Activated CD8-positive, alpha-beta memory T cell treated with anti-CD3 and anti-CD28 coated beads, Interleukin-2, amount 10 ng/mL, durations not matched to agents 7 days and 5 days (primary cell): ENCODE measurements at regions of chr7 and their contacts with region 1.

Region 1: GRCh38 chr7:38215735-38216670 is 38.0 kb downstream of the STARD3NL start:
- DNase-seq: peak; percentile 90
- ATAC-seq: peak; percentile 65
- H3K4me3 Mint-ChIP-seq: peak overlapping the region; percentile 34
- H3K27ac Mint-ChIP-seq: peak overlapping the region; percentile 91
- H3K4me1 Mint-ChIP-seq: peaks cover 55% of the 10 kb centered on the region
- H3K27me3 Mint-ChIP-seq: no peaks in the 10 kb centered on the region

Region 2: DNA sequence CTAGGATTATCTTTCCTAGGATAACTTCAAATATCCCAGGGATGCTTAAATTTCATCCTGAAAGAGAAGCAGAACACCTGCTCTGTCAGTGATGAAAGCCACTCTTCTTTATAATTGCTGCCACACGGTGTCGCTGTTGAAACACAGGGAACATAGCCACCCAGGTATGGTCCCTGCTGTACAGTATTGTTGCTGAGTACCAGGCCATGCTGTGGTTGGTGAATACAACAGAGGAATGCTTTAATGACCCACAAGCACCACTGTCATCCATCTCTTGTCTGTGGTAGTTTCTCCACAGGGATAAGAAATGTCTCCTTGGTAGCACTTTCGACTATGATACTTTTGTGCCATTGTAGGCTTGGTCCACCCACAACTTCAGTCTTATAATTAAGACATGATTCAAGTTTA is 108.5 kb before region 1 on chr7:
- CTCF ChIA-PET with region 1: interaction called, 60 read pairs
- DNase-seq: peak; percentile 79
- ATAC-seq: peak; percentile 91
- H3K4me3 Mint-ChIP-seq: no peak overlapping the region
- H3K27ac Mint-ChIP-seq: no peak overlapping the region
- H3K4me1 Mint-ChIP-seq: peaks cover 2% of the 10 kb centered on the region
- H3K27me3 Mint-ChIP-seq: peaks cover 36% of the 10 kb centered on the region

Region 3: GRCh38 chr7:38178004-38178694 is 37.9 kb before region 1 on chr7 and contains the start of gene STARD3NL:
- CTCF ChIA-PET with region 1: interaction called, 12 read pairs
- DNase-seq: peak; percentile 96
- ATAC-seq: peak; percentile 98
- H3K4me3 Mint-ChIP-seq: peak within 1 kb of the TSS; percentile 94
- H3K27ac Mint-ChIP-seq: peak within 1 kb of the TSS; percentile 92
- H3K4me1 Mint-ChIP-seq: peaks cover 41% of the 10 kb centered on the region
- H3K27me3 Mint-ChIP-seq: no peaks in the 10 kb centered on the region
- total RNA-seq, gene STARD3NL: 31.9 to 40.0 TPM

Region 4: GRCh38 chr7:38195804-38196595 is 20.0 kb before region 1 on chr7:
- CTCF ChIA-PET with region 1: interaction called, 69 read pairs
- DNase-seq: no peak
- ATAC-seq: no peak
- H3K4me3 Mint-ChIP-seq: no peak overlapping the region
- H3K27ac Mint-ChIP-seq: no peak overlapping the region
- H3K4me1 Mint-ChIP-seq: peaks cover 20% of the 10 kb centered on the region
- H3K27me3 Mint-ChIP-seq: no peaks in the 10 kb centered on the region

Region 5: DNA sequence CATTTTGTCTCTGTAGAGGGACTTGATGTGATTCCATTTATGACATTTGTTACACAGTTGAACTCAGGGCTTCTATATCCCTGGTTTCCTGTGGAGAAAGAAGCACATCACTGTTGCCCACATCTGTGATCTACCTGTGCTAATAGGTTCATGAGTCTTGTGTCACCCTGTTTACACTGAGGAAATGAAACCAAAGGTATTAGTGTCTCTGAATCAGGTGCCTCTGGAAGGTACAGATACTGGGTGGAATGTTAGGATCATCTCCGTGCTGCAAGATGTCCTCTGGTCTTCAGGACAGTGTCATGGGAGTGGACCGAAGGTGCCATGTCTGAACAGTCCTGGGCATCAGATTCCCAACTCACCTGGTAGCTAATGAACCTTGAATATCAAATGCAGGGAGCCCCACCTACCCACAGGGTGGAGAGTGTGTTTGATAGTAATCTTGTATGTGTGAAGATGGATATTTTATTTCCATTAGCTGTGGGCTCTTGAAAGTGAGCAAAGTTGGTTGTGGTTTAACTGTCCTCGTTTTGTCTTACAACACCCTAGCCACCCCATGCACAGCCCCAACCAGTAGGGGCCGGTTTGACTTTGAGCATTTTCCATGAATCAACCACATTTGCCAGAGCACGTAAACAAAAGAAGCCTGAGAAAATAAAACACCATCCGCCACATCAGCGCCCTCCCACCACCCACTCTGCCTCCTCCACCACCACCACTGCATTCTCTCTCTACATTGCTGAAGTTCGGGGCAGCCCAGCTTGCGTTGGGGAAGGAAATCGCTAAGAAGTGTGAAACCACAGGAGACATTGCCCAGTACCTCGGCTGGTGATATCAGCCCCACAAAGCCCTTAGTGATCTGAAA is 16.7 kb after region 1 on chr7:
- CTCF ChIA-PET with region 1: interaction called, 104 read pairs
- DNase-seq: peak; percentile 95
- ATAC-seq: peak; percentile 80
- H3K4me3 Mint-ChIP-seq: peak overlapping the region; percentile 55
- H3K27ac Mint-ChIP-seq: peak overlapping the region; percentile 96
- H3K4me1 Mint-ChIP-seq: peaks cover 91% of the 10 kb centered on the region
- H3K27me3 Mint-ChIP-seq: no peaks in the 10 kb centered on the region

Region 6: DNA sequence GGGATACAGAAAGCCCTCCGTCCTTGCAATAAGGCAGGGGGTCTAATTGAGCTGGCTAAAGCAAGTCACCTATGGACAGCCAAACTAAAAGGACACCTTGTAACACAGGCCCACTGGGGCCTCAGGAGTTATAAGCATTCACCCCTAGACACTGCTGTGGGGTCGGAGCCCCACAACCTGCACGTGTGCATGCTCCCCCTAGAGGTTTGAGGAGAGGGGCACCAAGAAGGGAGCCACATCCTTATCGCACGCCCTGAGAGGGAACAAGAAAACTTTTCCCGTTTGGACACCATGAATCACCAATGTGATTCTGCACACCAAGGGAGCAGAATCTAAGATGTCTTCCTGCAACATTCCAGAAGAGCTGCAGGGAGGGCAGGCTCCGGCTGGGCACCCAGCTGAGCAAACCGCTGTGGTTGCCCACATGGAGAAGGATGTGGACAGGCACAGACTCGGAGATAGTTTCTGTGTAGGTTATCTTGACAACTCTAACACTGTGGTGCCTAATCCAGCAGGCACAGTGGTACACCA is 75.2 kb after region 1 on chr7:
- CTCF ChIA-PET with region 1: no interaction called
- DNase-seq: no peak
- ATAC-seq: no peak
- H3K4me3 Mint-ChIP-seq: no peak overlapping the region
- H3K27ac Mint-ChIP-seq: no peak overlapping the region
- H3K4me1 Mint-ChIP-seq: no peaks in the 10 kb centered on the region
- H3K27me3 Mint-ChIP-seq: no peaks in the 10 kb centered on the region

Region 7: DNA sequence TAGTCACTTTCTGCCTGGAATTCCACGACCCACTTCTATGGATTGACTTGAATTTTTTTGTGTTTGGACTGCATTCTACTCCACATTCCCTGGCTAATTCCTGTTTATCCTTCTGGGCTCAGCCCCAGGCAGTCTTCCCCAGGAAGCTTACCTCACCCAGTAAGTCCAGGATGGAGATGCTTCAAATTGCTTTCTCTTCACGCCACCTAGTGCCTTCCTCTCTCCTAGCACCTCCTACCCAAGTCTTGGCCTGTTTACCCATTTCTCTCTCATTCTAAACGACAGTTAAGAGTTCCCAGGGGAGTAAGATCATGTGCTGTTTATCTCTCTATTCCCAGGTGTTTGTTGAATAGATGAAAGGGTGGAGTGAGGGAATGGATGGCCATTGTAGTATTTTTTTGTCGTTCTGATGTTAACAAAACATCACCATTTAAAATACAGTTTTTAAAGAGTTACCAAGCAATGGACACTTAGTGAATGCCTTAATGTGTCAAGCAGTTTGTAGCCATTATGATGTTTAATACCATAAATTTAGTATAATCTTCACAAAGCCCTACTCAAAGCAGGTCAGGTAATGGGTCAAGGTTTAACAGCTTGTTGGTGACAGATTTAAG is 102.9 kb after region 1 on chr7:
- CTCF ChIA-PET with region 1: interaction called, 55 read pairs
- DNase-seq: peak; percentile 58
- ATAC-seq: peak; percentile 52
- H3K4me3 Mint-ChIP-seq: peak overlapping the region; percentile 77
- H3K27ac Mint-ChIP-seq: peak overlapping the region; percentile 97
- H3K4me1 Mint-ChIP-seq: peaks cover 42% of the 10 kb centered on the region
- H3K27me3 Mint-ChIP-seq: no peaks in the 10 kb centered on the region